Lower lobe of right lung (tissue), 2 donors: ENCODE measurements at regions of chr17 and their contacts with region 1.

Region 1: DNA sequence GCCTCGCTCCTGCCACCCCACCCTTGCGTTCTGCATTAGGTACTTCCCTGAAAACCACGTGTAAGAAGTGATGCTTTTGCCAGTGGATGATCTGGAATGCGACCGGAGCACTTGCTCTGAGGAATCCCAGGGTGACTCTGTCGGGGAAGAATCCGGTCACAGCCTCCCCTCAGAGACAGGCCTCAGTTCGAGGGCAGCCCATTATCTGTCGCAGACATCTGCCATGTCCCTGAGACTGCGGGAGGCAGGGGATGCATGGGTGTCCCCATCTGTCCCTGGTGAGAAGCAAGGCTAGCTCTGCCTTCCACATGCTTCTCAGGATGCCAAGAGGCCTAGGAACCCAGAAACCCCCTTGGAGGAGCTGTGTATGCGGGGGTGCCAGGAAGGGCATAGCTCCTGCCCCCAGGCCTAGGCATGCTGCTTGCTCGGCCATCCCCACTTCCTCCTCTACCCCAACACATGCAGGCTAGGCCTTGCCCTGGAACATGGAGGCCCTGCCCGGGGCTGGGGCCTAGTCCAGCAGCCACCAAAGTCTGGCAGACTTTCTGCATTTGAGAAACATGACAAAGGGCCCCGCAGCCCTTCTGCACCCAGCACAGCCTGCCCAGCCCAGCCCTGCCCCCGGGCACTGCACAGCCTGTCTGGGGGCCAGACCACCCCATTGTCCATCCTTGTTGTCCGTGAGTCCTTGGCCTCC is 20.5 kb downstream of the MNT start:
- DNase-seq: no peak
- ATAC-seq: no peak
- H3K4me3 ChIP-seq: no peak overlapping the region
- H3K27ac ChIP-seq: no peak overlapping the region
- H3K4me1 ChIP-seq: peaks cover 18% of the 10 kb centered on the region
- H3K27me3 ChIP-seq: no peaks in the 10 kb centered on the region
- CTCF ChIP-seq: no peak

Region 2: DNA sequence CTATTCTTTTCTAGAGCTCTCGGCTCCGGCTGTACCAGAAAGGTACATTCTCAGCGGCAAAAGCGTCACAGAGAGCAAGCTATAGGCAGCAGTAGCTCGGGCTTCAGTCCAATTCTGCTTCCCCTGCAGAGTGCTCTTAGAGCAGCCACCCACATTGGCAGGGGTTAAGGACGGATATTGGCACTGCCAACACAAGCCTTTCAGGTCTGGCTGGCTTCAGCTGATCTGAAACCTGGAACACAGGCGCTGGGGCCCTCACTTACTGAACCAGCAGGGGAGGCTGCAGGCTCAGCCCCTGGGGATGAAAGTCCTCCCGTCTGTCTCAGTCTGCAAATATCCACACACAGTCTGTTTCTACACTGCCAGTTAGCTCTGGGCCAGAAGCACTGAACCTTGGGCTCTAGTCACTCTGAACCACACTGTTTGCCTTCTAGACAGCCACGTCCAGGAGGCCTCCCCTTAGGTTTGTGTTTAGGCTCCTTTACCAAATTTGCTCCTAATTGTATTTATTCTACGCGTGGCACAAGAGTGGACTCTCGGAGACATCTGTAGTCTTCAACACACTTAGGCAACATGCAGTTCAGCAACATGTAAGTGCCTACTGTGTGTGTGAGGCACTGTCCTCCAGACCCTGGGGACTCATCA is 285.4 kb before region 1 on chr17:
- intact Hi-C with region 1: no loop called
- DNase-seq: peak; percentile 81
- ATAC-seq: peak; percentile 78 to 81
- H3K4me3 ChIP-seq: no peak overlapping the region
- H3K27ac ChIP-seq: peak overlapping the region; percentile 39
- H3K4me1 ChIP-seq: peaks cover 51% of the 10 kb centered on the region
- H3K27me3 ChIP-seq: no peaks in the 10 kb centered on the region
- CTCF ChIP-seq: peak; percentile 58

Region 3: GRCh38 chr17:2416010-2416734 is 35.8 kb after region 1 on chr17:
- intact Hi-C with region 1: loop called (anchors 5 kb)
- DNase-seq: peak; percentile 89
- ATAC-seq: peak; percentile 90 to 91
- H3K4me3 ChIP-seq: no peak overlapping the region
- H3K27ac ChIP-seq: no peak overlapping the region
- H3K4me1 ChIP-seq: no peaks in the 10 kb centered on the region
- H3K27me3 ChIP-seq: no peaks in the 10 kb centered on the region
- CTCF ChIP-seq: peak; percentile 100